HEK293 (cell line): ENCODE measurements at regions of chr7 and their contacts with region 1.

Region 1: DNA sequence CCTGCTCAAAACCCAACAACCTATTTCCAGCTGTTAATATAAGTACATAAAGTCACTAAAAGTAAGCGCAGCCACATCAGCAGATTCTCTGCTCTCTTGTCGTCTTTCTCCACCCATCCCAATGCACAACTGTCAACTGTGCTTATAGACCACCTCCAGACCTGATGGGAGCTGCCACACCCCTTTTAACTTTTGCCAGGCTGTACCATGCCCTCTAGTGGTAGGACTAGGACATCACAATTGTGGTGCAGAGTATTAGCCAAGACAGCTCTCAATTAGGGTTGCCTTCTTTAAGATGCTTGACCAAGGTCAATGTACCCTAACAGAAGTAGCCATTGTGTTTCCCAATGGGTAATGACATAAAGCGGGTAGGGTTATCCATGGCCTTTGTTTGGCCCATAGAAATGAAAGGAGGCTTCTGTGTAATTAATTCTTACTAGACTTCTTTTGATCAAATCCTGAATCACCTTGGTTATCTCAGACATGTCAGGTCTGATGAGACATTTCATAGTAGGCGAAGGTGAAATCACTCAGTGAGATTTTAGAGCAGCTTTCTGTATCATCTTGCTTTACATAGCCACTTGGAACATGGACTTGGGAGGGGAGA is 68.1 kb downstream of the SCRN1 start:
- H3K4me3 ChIP-seq: no peak overlapping the region
- H3K27ac ChIP-seq: no peak overlapping the region
- H3K4me1 ChIP-seq: no peaks in the 10 kb centered on the region
- CTCF ChIP-seq: peak; percentile 56; the same call in 1 of the 2 replicates

Region 2: DNA sequence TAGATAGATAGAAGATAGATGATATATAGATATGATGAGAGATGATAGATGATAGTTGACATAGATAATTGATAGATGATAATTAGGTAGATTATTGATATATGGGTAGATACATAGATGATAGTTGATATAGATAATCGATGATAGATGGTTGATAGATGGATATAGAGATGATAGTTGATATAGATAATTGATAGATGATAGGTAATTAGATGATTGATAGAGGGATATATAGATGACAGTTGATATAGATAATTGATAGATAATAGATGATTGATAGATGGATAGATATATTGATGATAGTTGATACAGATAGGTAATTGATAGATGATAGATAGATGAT is 285.5 kb before region 1 on chr7:
- CTCF ChIA-PET with region 1: interaction called, 36 read pairs
- POLR2A ChIA-PET with region 1: no interaction called
- H3K4me3 ChIP-seq: no peak overlapping the region
- H3K27ac ChIP-seq: no peak overlapping the region
- H3K4me1 ChIP-seq: no peaks in the 10 kb centered on the region
- CTCF ChIP-seq: no peak

Region 3: GRCh38 chr7:29748286-29749108 is 173.0 kb before region 1 on chr7:
- CTCF ChIA-PET with region 1: interaction called, 29 read pairs
- POLR2A ChIA-PET with region 1: no interaction called
- H3K4me3 ChIP-seq: no peak overlapping the region
- H3K27ac ChIP-seq: no peak overlapping the region
- H3K4me1 ChIP-seq: no peaks in the 10 kb centered on the region
- CTCF ChIP-seq: 0 out of 2 replicates have a peak, but pooled peaks have one; percentile 8

Region 4: GRCh38 chr7:29764227-29764626 is 157.3 kb before region 1 on chr7:
- CTCF ChIA-PET with region 1: interaction called, 21 read pairs
- POLR2A ChIA-PET with region 1: no interaction called
- H3K4me3 ChIP-seq: no peak overlapping the region
- H3K27ac ChIP-seq: no peak overlapping the region
- H3K4me1 ChIP-seq: no peaks in the 10 kb centered on the region
- CTCF ChIP-seq: peak; percentile 49; the same call in 1 of the 2 replicates

Region 5: DNA sequence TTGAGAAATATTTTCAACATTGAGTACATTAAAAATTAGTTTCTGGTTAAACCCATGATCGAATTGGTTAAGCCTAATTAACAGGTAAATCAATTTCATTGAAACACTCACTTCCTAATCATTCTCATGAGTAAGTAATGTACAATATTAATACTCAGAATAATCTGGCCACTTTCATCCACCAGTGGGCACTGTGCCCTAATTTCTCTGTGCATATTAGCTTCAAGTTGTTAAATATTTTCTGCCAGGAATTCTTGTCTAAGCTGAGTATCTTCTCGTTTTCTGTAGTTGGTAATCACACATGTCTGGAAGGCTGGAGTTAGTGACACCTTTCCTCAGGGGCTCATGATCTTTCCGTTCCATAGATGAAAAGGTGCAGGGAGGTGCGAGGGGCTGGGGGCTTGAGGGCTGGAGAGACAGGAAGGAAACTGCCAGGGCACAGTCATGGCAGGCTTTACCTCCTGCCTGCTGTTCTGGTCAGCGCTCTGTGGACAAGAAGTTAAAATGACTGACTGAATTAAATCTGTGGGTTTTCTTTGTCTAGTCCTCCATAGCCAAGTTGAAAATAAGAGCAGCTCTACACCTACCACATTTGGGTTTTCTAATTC is 43.3 kb before region 1 on chr7:
- CTCF ChIA-PET with region 1: interaction called, 31 read pairs
- POLR2A ChIA-PET with region 1: no interaction called
- H3K4me3 ChIP-seq: no peak overlapping the region
- H3K27ac ChIP-seq: no peak overlapping the region
- H3K4me1 ChIP-seq: no peaks in the 10 kb centered on the region
- CTCF ChIP-seq: no peak

Region 6: DNA sequence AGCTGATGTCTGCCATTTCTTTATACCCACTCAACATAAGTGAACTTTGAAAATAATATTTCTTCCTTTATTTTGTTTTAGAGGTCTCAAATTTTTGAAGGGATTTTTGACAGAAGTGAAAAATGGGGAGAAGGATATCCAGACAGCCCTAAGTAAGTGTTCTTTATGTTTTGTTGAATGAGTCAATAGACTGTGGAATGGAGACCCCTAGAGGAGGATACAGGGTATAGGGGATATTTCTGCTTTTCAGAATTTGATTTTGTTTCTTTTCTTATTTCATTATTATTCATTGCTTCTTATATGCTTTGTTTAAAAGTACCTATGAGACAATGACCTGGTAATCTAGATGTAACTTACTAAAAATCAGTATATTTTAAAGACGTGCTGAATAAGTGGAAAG is 141.1 kb after region 1 on chr7:
- CTCF ChIA-PET with region 1: interaction called, 15 read pairs
- POLR2A ChIA-PET with region 1: no interaction called
- H3K4me3 ChIP-seq: no peak overlapping the region
- H3K27ac ChIP-seq: no peak overlapping the region
- H3K4me1 ChIP-seq: no peaks in the 10 kb centered on the region
- CTCF ChIP-seq: no peak